PC-9 (cell line): ENCODE measurements at regions of chr6 and their contacts with region 1.

Region 1: GRCh38 chr6:19538077-19538512 is 299.1 kb upstream of the ID4 start:
- DNase-seq: peak; percentile 96 to 99
- H3K4me3 ChIP-seq: no peak overlapping the region
- H3K27ac ChIP-seq: no peak overlapping the region
- H3K4me1 ChIP-seq: peaks cover 24% of the 10 kb centered on the region
- H3K27me3 ChIP-seq: no peaks in the 10 kb centered on the region
- CTCF ChIP-seq: no peak

Region 2: DNA sequence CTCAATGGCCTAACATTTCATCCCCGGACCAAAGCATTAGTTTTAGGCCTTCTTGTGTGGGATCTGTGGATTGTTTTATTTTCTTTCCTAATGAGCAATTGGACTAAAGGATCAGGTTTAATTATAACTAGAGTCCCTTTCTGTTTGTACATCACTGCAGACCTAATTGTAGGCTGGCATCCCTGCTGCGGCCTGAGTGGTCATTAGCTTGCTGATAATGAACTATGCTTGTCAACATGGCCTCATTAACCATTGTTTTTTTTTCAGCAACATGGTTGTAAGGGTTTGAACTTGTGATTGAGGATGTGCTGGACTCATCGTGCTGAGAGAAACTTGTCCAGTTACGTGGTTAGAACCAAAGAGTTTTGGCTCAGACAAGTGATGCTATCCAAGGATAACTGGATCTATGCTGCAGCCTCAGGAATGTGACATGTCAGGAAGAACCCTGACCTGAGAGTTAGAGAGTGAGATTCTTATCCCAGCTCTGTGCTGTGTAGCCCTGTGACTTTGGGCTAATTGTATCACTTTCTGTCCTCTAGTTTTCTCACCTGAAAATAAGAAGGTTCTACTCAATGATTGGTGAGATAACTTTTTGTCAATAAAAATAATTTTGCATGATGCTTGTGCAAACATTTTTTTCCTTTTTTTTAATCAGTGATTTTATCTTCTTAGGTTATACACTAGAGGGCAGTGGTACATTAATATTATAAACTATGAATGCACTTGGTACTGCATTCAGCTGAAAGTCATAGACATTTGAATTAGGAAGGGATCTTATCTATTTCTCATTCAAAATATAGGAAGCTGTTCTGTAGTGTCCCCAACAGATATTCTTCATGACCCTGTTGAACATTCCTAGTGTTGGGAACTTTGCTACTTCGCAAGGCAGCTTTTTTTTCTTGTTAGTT is 1010.0 kb before region 1 on chr6:
- CTCF ChIA-PET with region 1: no interaction called
- POLR2A ChIA-PET with region 1: no interaction called
- intact Hi-C with region 1: no loop called
- DNase-seq: no peak
- H3K4me3 ChIP-seq: no peak overlapping the region
- H3K27ac ChIP-seq: no peak overlapping the region
- H3K4me1 ChIP-seq: no peaks in the 10 kb centered on the region
- H3K27me3 ChIP-seq: no peaks in the 10 kb centered on the region
- CTCF ChIP-seq: peak; percentile 66

Region 3: GRCh38 chr6:19415585-19416326 is 122.3 kb before region 1 on chr6:
- CTCF ChIA-PET with region 1: no interaction called
- POLR2A ChIA-PET with region 1: no interaction called
- intact Hi-C with region 1: loop called (anchors 2 kb)
- DNase-seq: peak; percentile 60 to 94
- H3K4me3 ChIP-seq: peak overlapping the region; percentile 16; the same call in 1 of the 2 replicates
- H3K27ac ChIP-seq: peak overlapping the region; percentile 91
- H3K4me1 ChIP-seq: peaks cover 57% of the 10 kb centered on the region
- H3K27me3 ChIP-seq: no peaks in the 10 kb centered on the region
- CTCF ChIP-seq: no peak

Region 4: DNA sequence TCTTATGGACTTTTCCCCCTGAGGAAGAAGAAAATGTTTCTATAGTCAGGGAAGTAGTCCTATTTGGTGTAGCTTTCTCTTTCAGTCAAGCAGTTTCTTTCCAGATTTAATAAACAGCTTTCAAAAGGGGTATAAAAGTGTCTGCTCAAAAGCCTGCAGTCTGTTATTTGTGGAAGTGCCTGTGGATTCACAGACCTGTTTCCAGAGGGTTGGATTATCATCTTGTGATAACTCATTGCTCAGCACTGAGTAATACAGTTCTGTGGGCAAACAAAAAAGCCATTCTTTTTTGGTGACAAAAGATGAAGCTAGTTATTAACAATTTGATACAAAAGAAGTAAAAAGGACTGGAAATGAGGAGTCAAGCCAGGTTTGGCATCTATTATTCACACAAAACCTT is 59.1 kb before region 1 on chr6:
- CTCF ChIA-PET with region 1: no interaction called
- POLR2A ChIA-PET with region 1: no interaction called
- intact Hi-C with region 1: loop called (anchors 1 kb)
- DNase-seq: peak in 1 of 2 experiments; percentile 44
- H3K4me3 ChIP-seq: no peak overlapping the region
- H3K27ac ChIP-seq: no peak overlapping the region
- H3K4me1 ChIP-seq: peaks cover 32% of the 10 kb centered on the region
- H3K27me3 ChIP-seq: no peaks in the 10 kb centered on the region
- CTCF ChIP-seq: no peak

Region 5: GRCh38 chr6:19492636-19493405 is 45.3 kb before region 1 on chr6:
- CTCF ChIA-PET with region 1: no interaction called
- POLR2A ChIA-PET with region 1: no interaction called
- intact Hi-C with region 1: loop called (anchors 5 kb)
- DNase-seq: peak in 1 of 2 experiments; percentile 72
- H3K4me3 ChIP-seq: no peak overlapping the region
- H3K27ac ChIP-seq: peak overlapping the region; percentile 47
- H3K4me1 ChIP-seq: peaks cover 12% of the 10 kb centered on the region
- H3K27me3 ChIP-seq: no peaks in the 10 kb centered on the region
- CTCF ChIP-seq: no peak

Region 6: GRCh38 chr6:19759117-19759880 is 221.2 kb after region 1 on chr6:
- CTCF ChIA-PET with region 1: no interaction called
- POLR2A ChIA-PET with region 1: no interaction called
- intact Hi-C with region 1: no loop called
- DNase-seq: peak; percentile 14 to 46
- H3K4me3 ChIP-seq: no peak overlapping the region
- H3K27ac ChIP-seq: no peak overlapping the region
- H3K4me1 ChIP-seq: peaks cover 11% of the 10 kb centered on the region; the same call in 1 of the 2 replicates
- H3K27me3 ChIP-seq: no peaks in the 10 kb centered on the region
- CTCF ChIP-seq: no peak

Region 7: GRCh38 chr6:19836799-19837510 is 298.9 kb after region 1 on chr6 and contains the start of gene ID4:
- CTCF ChIA-PET with region 1: no interaction called
- POLR2A ChIA-PET with region 1: interaction called, 4 read pairs
- intact Hi-C with region 1: loop called (anchors 1 kb)
- DNase-seq: peak in 1 of 2 experiments; percentile 83
- H3K4me3 ChIP-seq: peak within 1 kb of the TSS; percentile 66
- H3K27ac ChIP-seq: no peak within 1 kb of the TSS
- H3K4me1 ChIP-seq: peaks cover 13% of the 10 kb centered on the region
- H3K27me3 ChIP-seq: peaks cover 17% of the 10 kb centered on the region
- CTCF ChIP-seq: no peak
- total RNA-seq, gene ID4: 4.4 and 5.9 TPM in 2 replicates

Region 8: GRCh38 chr6:19911223-19911622 is 373.1 kb after region 1 on chr6:
- CTCF ChIA-PET with region 1: no interaction called
- POLR2A ChIA-PET with region 1: no interaction called
- intact Hi-C with region 1: no loop called
- DNase-seq: no peak
- H3K4me3 ChIP-seq: no peak overlapping the region
- H3K27ac ChIP-seq: no peak overlapping the region
- H3K4me1 ChIP-seq: no peaks in the 10 kb centered on the region
- H3K27me3 ChIP-seq: no peaks in the 10 kb centered on the region
- CTCF ChIP-seq: no peak